ENCODE measurements at regions of chr10 and their contacts with region 1.

Region 1: GRCh38 chr10:21533467-21534279 is at the start of gene MLLT10:
- DNase-seq: peak; percentile 90 to 97 (median 94)
- ATAC-seq: peak; percentile 79 to 85
- H3K4me3 Mint-ChIP-seq: peak within 1 kb of the TSS; percentile 89 to 98 (median 93)
- H3K27ac Mint-ChIP-seq: peak within 1 kb of the TSS; percentile 37 to 99 (median 96)
- H3K4me1 Mint-ChIP-seq: peaks cover 9 to 25% (median 21%) of the 10 kb centered on the region in 4 donors
- H3K27me3 Mint-ChIP-seq: no peaks in the 10 kb centered on the region
- polyA plus RNA-seq, gene MLLT10: 3.5 to 4.6 (median 4.4) TPM

Region 2: GRCh38 chr10:21488246-21488956 is 45.3 kb before region 1 on chr10:
- POLR2A ChIA-PET with region 1: no interaction called
- DNase-seq: no peak
- ATAC-seq: no peak
- H3K4me3 Mint-ChIP-seq: no peak overlapping the region
- H3K27ac Mint-ChIP-seq: no peak overlapping the region
- H3K4me1 Mint-ChIP-seq: no peaks in the 10 kb centered on the region
- H3K27me3 Mint-ChIP-seq: peaks cover 12 to 30% (median 15%) of the 10 kb centered on the region in 5 donors

Region 3: DNA sequence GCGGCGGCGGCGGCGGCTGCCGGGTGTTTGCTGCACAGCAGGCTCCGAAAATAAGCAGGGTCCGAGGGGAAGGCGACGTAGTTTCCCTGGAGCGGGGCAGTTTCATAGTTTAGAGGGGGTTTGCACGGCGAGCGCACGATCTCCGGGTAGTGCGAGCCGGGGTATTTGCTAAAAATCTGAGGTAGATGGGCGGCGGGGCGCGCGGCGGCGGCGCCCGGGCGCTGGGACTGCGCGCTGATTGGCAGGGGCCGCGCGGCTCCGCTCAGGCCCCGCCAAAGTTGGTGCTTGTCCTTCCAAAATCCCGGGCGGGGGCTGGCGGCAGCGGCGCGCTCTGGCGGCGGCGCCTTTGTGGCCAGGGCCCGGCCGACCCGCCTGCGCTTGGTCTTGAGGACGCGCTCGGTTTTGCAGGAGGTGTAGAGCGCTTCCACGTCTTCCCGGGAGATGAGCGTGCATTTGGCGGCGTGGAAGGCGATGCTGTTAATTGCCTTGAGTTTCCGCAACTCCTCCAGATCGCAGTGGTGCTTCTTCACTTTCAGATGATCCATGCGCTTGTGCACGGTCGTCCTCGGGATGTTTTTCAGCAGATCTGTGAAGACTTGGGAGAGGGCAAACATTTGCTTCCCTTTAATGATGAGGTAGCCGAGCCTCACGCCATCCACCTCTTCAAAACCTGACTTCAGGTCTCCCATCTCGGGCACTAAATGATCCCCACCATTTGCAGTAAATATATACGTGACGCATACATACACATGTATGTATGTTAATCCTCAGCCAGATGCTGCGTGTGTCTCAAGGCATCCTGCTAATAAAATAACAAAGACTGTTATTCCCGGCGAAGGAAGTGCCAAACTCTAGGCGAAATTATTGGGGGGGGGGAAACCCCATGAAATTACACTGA is 16.3 kb before region 1 on chr10:
- POLR2A ChIA-PET with region 1: interaction called, 11 read pairs
- DNase-seq: peak in 3 of 10 donors; percentile 36 to 41 (median 39)
- ATAC-seq: peak; percentile 44 to 47
- H3K4me3 Mint-ChIP-seq: peak overlapping the region; percentile 69 to 86 (median 82)
- H3K27ac Mint-ChIP-seq: peak overlapping the region in 2 of 10 donors; percentile 80 to 83
- H3K4me1 Mint-ChIP-seq: peaks cover 15 to 37% (median 33%) of the 10 kb centered on the region in 4 donors
- H3K27me3 Mint-ChIP-seq: peaks cover 49 to 85% (median 74%) of the 10 kb centered on the region in 5 donors

Region 4: DNA sequence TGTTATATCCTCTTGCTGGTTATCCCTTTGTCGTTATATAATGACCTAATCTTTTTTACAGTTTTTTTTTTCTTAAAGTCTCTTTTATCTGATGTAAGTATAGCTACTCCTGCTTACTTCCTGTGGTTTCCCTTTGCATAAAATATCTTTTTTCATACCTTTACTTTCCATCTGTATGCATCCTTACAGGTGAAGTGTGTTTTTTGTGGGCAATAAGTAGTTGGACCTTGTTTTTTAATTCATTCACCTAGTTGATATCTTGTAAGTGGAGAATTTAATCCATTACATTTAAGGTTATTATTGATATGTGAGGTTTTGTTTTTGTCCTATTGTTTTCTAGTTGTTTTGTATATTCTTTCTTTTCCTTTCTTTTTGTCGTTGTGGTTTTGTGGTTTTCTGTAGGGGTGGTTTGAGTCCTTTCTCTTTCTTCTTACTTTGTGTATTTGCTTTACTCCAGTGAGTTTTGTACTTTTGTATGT is 169.0 kb after region 1 on chr10:
- POLR2A ChIA-PET with region 1: no interaction called
- DNase-seq: peak in 4 of 10 donors; percentile 5 to 69 (median 62)
- ATAC-seq: peak; percentile 86 to 90
- H3K4me3 Mint-ChIP-seq: peak overlapping the region; percentile 27 to 70 (median 58)
- H3K27ac Mint-ChIP-seq: peak overlapping the region; percentile 2 to 89 (median 48)
- H3K4me1 Mint-ChIP-seq: peaks cover 21 to 42% (median 37%) of the 10 kb centered on the region in 4 donors
- H3K27me3 Mint-ChIP-seq: no peaks in the 10 kb centered on the region

Measured in naive thymus-derived CD8-positive, alpha-beta T cell (primary cell).